ENCODE measurements at regions of chr19 and their contacts with region 1.

Region 1: GRCh38 chr19:55516878-55517620 is 19.9 kb downstream of the SBK2 start:
- DNase-seq: peak; percentile 96
- H3K4me3 ChIP-seq: peak overlapping the region; percentile 37
- H3K27ac ChIP-seq: peak overlapping the region; percentile 36
- H3K4me1 ChIP-seq: no peaks in the 10 kb centered on the region
- H3K27me3 ChIP-seq: no peaks in the 10 kb centered on the region
- CTCF ChIP-seq: peak; percentile 64

Region 2: DNA sequence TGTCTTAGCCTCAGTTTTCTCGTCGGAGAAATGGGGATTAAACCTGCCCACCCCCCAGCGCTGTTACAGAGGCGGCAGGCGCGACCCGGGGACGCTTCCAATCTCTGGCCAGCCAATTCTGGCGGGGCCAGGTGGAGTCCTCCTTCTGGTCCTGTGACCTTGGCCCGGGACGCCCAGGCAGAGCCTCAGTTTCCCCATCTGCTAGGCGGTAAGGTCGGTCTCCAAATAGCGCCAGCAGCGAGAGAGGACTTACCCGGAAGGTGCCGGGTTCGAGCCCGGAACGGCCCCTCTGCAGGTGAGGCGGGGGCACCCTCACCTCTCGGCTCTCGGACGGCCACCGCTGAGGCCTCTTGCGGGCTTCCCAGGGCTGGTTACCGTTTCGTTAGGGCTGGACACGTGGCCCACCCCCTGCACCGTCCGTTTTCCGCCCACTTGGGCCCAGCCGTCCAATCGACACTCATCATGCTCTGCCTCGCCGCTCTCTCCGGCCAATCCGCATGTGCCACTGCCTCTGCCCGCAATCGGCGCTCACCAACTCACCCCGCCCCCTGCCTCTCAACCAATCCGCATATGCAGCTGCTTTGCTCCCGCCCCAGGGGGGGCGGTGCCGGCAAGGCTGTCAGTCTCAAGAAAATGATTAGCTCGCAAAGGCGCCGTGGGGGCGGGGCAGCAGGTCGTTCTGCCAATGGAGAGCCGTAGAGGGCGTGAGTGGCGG is 55.6 kb before region 1 on chr19 and contains the start of gene ISOC2:
- intact Hi-C with region 1: no loop called
- DNase-seq: peak; percentile 100
- H3K4me3 ChIP-seq: peak within 1 kb of the TSS; percentile 78
- H3K27ac ChIP-seq: peak within 1 kb of the TSS; percentile 87
- H3K4me1 ChIP-seq: no peaks in the 10 kb centered on the region
- H3K27me3 ChIP-seq: no peaks in the 10 kb centered on the region
- CTCF ChIP-seq: no peak
- total RNA-seq, gene ISOC2: 89.8 to 132 TPM

Region 3: DNA sequence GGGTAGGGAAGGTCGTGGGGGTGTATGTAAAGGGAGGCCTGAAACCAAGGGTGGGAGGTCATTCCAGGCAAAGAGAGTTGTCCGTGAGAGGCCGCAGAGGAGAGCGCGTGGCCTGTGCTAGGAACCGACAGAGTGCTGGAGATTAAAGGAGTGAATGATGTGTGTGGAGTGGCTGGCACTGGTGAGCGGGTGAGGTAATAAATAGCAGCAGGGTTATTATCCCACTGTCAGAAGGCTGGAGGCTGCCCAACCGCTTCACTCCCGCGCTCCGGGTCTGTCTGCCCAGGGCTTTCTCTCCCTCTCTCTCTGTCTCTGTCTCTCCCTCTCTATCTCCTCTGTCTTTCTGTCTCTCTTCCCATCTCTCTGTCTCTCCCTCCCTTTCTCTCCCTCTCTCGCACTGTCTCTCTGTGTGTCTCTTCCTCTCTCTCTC is 46.2 kb after region 1 on chr19:
- intact Hi-C with region 1: no loop called
- DNase-seq: no peak
- H3K4me3 ChIP-seq: no peak overlapping the region
- H3K27ac ChIP-seq: no peak overlapping the region
- H3K4me1 ChIP-seq: no peaks in the 10 kb centered on the region
- H3K27me3 ChIP-seq: no peaks in the 10 kb centered on the region
- CTCF ChIP-seq: no peak

Region 4: DNA sequence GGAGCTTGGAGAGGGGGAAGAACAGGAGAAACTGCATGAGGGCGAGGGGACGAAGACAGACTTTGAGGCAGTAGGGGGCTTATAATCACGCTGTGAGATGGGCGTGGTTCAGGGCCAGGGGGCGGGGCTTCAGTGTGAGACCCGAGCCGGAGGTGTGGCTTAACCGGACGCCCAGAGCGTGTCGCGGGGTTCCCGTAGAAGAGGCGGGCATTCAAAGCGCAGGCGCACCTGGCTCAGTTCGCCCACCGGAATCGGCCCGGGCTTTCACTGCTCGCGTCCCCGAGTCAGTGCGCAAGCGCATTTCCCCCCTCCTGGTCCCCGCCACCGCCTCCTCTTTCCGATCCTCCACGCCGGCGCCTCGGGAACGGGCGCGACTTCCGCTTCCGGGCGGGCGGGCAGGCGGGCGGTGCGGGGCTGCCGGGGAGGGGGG is 88.2 kb after region 1 on chr19:
- intact Hi-C with region 1: loop called (anchors 5 kb)
- DNase-seq: peak; percentile 97
- H3K4me3 ChIP-seq: peak overlapping the region; percentile 76
- H3K27ac ChIP-seq: peak overlapping the region; percentile 96
- H3K4me1 ChIP-seq: peaks cover 7% of the 10 kb centered on the region
- H3K27me3 ChIP-seq: no peaks in the 10 kb centered on the region
- CTCF ChIP-seq: no peak

Region 5: GRCh38 chr19:55632463-55632834 is 115.4 kb after region 1 on chr19:
- intact Hi-C with region 1: loop called (anchors 2 kb)
- DNase-seq: peak; percentile 97
- H3K4me3 ChIP-seq: no peak overlapping the region
- H3K27ac ChIP-seq: no peak overlapping the region
- H3K4me1 ChIP-seq: peaks cover 12% of the 10 kb centered on the region
- H3K27me3 ChIP-seq: no peaks in the 10 kb centered on the region
- CTCF ChIP-seq: peak; percentile 72

Region 6: GRCh38 chr19:57057036-57057686 is 1540.1 kb after region 1 on chr19:
- intact Hi-C with region 1: no loop called
- DNase-seq: peak; percentile 59
- H3K4me3 ChIP-seq: no peak overlapping the region
- H3K27ac ChIP-seq: no peak overlapping the region
- H3K4me1 ChIP-seq: no peaks in the 10 kb centered on the region
- H3K27me3 ChIP-seq: no peaks in the 10 kb centered on the region
- CTCF ChIP-seq: no peak